ENCODE measurements at regions of chr12 and their contacts with region 1.

Region 1: GRCh38 chr12:49707128-49707811 is at the start of gene FMNL3:
- DNase-seq: peak; percentile 95 to 99
- H3K4me3 ChIP-seq: peak within 1 kb of the TSS; percentile 43
- CTCF ChIP-seq: peak in 2 of 3 donors; percentile 61 to 95
- POLR2A ChIP-seq: no peak
- total RNA-seq, gene FMNL3: 4.3 to 12.5 (median 6.9) TPM

Region 2: GRCh38 chr12:49644620-49644994 is 62.7 kb before region 1 on chr12:
- intact Hi-C with region 1: loop called (anchors 5 kb)
- DNase-seq: peak; percentile 65 to 95
- H3K4me3 ChIP-seq: no peak overlapping the region
- CTCF ChIP-seq: peak in 1 of 3 donors; percentile 67
- POLR2A ChIP-seq: no peak